BJ (cell line): ENCODE measurements at regions of chr17 and their contacts with region 1.

Region 1: GRCh38 chr17:45277216-45277849 is 15.4 kb upstream of the SPATA32 start:
- DNase-seq: no peak
- H3K4me3 ChIP-seq: no peak overlapping the region
- H3K27me3 ChIP-seq: no peaks in the 10 kb centered on the region
- CTCF ChIP-seq: peak; percentile 82

Region 2: GRCh38 chr17:45228763-45229539 is 48.4 kb before region 1 on chr17:
- CTCF ChIA-PET with region 1: interaction called, 13 read pairs
- POLR2A ChIA-PET with region 1: no interaction called
- DNase-seq: no peak
- H3K4me3 ChIP-seq: no peak overlapping the region
- H3K27me3 ChIP-seq: no peaks in the 10 kb centered on the region
- CTCF ChIP-seq: no peak

Region 3: GRCh38 chr17:45265821-45266220 is 11.5 kb before region 1 on chr17:
- CTCF ChIA-PET with region 1: interaction called, 35 read pairs
- POLR2A ChIA-PET with region 1: no interaction called
- DNase-seq: no peak
- H3K4me3 ChIP-seq: no peak overlapping the region
- H3K27me3 ChIP-seq: no peaks in the 10 kb centered on the region
- CTCF ChIP-seq: no peak

Region 4: GRCh38 chr17:45307290-45308015 is 30.1 kb after region 1 on chr17:
- CTCF ChIA-PET with region 1: interaction called, 25 read pairs
- POLR2A ChIA-PET with region 1: no interaction called
- DNase-seq: peak; percentile 77
- H3K4me3 ChIP-seq: no peak overlapping the region
- H3K27me3 ChIP-seq: no peaks in the 10 kb centered on the region
- CTCF ChIP-seq: no peak

Region 5: DNA sequence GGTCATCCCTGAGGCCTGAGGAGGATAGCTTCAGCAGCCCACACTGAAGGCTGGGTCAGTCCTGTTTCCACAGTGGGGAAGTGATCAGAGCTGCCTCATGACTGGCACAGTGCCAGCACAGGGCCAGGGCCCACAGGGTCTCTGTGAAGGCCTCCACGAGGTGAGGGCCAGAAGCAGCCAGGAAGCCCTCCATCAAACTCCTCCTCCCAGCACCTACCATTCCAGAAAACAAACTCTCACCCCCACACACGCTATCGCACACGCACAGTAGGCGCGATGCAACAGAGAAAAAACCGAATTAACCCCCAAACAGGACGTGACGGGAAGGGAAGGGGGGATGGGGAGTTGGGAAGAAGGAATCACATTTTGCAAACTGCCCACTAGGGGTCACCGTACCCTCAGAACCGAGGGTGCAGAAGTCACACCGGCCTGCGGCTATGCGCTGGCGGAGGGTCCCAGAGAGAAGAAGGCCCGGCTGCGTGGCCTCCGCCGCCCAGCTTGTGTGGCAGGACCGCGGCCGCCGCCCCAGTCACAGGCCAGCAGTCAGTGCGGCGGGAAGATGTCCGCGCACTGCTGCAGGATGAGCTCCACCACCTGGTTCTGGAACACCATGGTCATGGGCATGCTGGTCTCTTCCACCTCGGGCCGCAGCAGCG is 117.7 kb after region 1 on chr17:
- CTCF ChIA-PET with region 1: interaction called, 40 read pairs
- POLR2A ChIA-PET with region 1: no interaction called
- DNase-seq: peak; percentile 27
- H3K4me3 ChIP-seq: peak overlapping the region; percentile 4; the same call in 1 of the 2 replicates
- H3K27me3 ChIP-seq: peaks cover 1% of the 10 kb centered on the region; the same call in 1 of the 2 replicates
- CTCF ChIP-seq: peak; percentile 80